Adrenal gland (tissue), 19 donors: ENCODE measurements at regions of chr18 and their contacts with region 1.

Region 1: DNA sequence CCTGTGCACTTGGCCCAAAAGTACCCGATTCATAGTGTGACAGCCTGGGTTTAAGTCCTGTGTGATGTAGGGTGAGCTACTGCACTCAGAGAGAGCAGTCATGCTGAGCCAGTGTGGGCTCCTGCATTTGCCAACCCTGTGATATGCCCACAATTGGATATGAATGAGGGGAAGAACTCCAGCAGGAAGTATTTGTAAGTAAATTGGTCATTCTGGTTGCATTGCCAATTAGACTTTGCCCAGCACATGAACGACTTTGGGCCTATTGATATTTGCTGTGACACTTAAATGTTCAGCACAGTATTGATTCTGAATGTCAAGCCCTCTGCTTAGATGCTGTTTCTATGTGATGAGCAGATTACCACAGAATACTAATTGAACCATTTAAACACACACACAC is 570.9 kb downstream of the PIK3C3 start:
- DNase-seq: no peak
- H3K4me3 ChIP-seq: no peak overlapping the region
- H3K27ac ChIP-seq: no peak overlapping the region
- H3K4me1 ChIP-seq: no peaks in the 10 kb centered on the region
- H3K27me3 ChIP-seq: no peaks in the 10 kb centered on the region
- CTCF ChIP-seq: no peak
- POLR2A ChIP-seq: no peak

Region 2: DNA sequence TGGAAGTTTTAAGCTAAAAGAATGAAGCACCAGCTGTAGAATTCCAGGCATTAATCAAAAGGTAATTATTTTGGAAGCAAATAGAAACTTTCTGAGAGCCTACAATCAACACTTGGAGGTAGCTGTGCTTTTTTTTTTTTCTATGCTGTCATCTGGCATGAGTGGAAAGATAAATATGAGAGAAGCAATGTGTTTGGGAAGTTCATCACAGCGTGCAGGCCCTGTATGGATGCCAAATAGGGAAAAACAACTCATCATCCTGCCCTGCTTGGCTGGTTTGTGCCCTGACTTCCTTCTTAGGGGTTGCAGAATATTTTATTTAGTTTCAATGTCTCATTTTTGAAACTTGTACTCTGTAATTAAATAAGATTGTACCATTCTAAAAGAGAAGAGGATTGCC is 133.5 kb before region 1 on chr18:
- intact Hi-C with region 1: loop called in 1 of 2 experiments (anchors 10 kb)
- DNase-seq: no peak
- H3K4me3 ChIP-seq: no peak overlapping the region
- H3K27ac ChIP-seq: no peak overlapping the region
- H3K4me1 ChIP-seq: no peaks in the 10 kb centered on the region
- H3K27me3 ChIP-seq: no peaks in the 10 kb centered on the region
- CTCF ChIP-seq: no peak
- POLR2A ChIP-seq: no peak

Region 3: DNA sequence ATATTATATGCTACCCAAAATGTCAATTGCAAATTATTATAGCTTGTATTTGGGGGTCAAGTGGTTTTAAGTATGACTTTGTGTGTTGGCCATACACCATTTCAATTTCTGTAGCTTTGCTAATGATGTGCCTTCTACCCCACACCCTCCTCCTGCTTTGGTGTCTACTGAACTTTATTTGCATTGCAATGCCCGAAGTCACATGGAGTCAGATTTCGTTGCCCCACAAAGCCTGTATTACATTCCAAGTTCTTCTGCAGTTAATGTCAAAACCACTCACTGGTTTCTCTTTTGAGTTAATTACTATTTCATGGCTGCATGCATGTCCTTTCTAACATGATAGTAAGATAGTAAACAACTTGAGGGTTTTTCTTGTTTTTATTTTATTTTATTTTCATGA is 60.7 kb after region 1 on chr18:
- intact Hi-C with region 1: no loop called
- DNase-seq: no peak
- H3K4me3 ChIP-seq: no peak overlapping the region
- H3K27ac ChIP-seq: no peak overlapping the region
- H3K4me1 ChIP-seq: no peaks in the 10 kb centered on the region
- H3K27me3 ChIP-seq: no peaks in the 10 kb centered on the region
- CTCF ChIP-seq: no peak
- POLR2A ChIP-seq: no peak